ENCODE measurements at regions of chr19 and their contacts with region 1.

Region 1: GRCh38 chr19:3692141-3693024 is 7.9 kb downstream of the PIP5K1C start:
- DNase-seq: peak in 1 of 2 experiments; percentile 84
- H3K4me3 ChIP-seq: no peak overlapping the region
- H3K27ac ChIP-seq: no peak overlapping the region
- H3K4me1 ChIP-seq: peaks cover 0 to 11% (median 8%) of the 10 kb centered on the region in 4 experiments; a peak in 5 of 7 replicates
- H3K27me3 ChIP-seq: no peaks in the 10 kb centered on the region; a peak in 1 of 7 replicates
- CTCF ChIP-seq: peak; percentile 53 to 76 (median 70)
- EP300 ChIP-seq: no peak
- POLR2A ChIP-seq: no peak
- RAD21 ChIP-seq: peak; percentile 7 to 32; a peak in 3 of 4 replicates

Region 2: DNA sequence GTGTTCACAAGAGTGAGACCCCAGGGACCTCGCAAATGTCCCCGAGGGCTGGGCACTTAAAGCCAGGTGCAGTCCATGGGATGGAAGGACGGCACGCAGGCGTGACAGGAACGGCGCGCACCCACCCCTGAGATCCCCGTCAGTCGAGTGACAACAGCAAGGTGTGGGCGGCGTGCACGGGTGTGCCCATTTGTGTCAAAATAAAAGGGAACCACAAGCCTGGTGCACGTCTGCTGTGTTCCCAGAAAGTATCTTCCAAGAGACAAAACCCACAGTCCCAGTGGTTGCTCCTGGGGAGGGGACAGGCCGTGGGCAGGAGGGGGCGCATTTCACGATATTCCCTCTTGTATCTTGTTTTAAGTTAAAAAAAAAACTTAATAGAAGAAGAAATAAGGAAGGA is 50.1 kb before region 1 on chr19:
- CTCF ChIA-PET with region 1: no interaction called
- POLR2A ChIA-PET with region 1: no interaction called
- DNase-seq: no peak
- H3K4me3 ChIP-seq: no peak overlapping the region
- H3K27ac ChIP-seq: no peak overlapping the region
- H3K4me1 ChIP-seq: no peaks in the 10 kb centered on the region
- H3K27me3 ChIP-seq: no peaks in the 10 kb centered on the region
- CTCF ChIP-seq: no peak
- EP300 ChIP-seq: no peak
- POLR2A ChIP-seq: no peak
- RAD21 ChIP-seq: no peak

Region 3: GRCh38 chr19:3655402-3656072 is 36.8 kb before region 1 on chr19:
- CTCF ChIA-PET with region 1: interaction called, 10 read pairs
- POLR2A ChIA-PET with region 1: no interaction called
- DNase-seq: no peak
- H3K4me3 ChIP-seq: no peak overlapping the region
- H3K27ac ChIP-seq: no peak overlapping the region
- H3K4me1 ChIP-seq: no peaks in the 10 kb centered on the region
- H3K27me3 ChIP-seq: no peaks in the 10 kb centered on the region
- CTCF ChIP-seq: no peak
- EP300 ChIP-seq: no peak
- POLR2A ChIP-seq: no peak
- RAD21 ChIP-seq: no peak

Region 4: GRCh38 chr19:3670796-3671679 is 21.3 kb before region 1 on chr19:
- CTCF ChIA-PET with region 1: interaction called, 85 read pairs
- POLR2A ChIA-PET with region 1: interaction called, 12 read pairs
- DNase-seq: no peak
- H3K4me3 ChIP-seq: no peak overlapping the region
- H3K27ac ChIP-seq: no peak overlapping the region; the same call in 1 of the 2 replicates
- H3K4me1 ChIP-seq: peaks cover 0 to 21% (median 10%) of the 10 kb centered on the region in 4 experiments; a peak in 5 of 7 replicates
- H3K27me3 ChIP-seq: no peaks in the 10 kb centered on the region
- CTCF ChIP-seq: no peak
- EP300 ChIP-seq: no peak
- POLR2A ChIP-seq: no peak
- RAD21 ChIP-seq: no peak

Region 5: GRCh38 chr19:3710265-3710812 is 18.0 kb after region 1 on chr19:
- CTCF ChIA-PET with region 1: interaction called, 38 read pairs
- POLR2A ChIA-PET with region 1: interaction called, 5 read pairs
- DNase-seq: peak in 1 of 2 experiments; percentile 65
- H3K4me3 ChIP-seq: no peak overlapping the region
- H3K27ac ChIP-seq: no peak overlapping the region
- H3K4me1 ChIP-seq: peaks cover 0 to 20% (median 14%) of the 10 kb centered on the region in 4 experiments; a peak in 4 of 7 replicates
- H3K27me3 ChIP-seq: peaks cover 0 to 3% (median 0%) of the 10 kb centered on the region in 4 experiments; a peak in 1 of 7 replicates
- CTCF ChIP-seq: no peak
- EP300 ChIP-seq: no peak
- POLR2A ChIP-seq: no peak
- RAD21 ChIP-seq: no peak

Region 6: DNA sequence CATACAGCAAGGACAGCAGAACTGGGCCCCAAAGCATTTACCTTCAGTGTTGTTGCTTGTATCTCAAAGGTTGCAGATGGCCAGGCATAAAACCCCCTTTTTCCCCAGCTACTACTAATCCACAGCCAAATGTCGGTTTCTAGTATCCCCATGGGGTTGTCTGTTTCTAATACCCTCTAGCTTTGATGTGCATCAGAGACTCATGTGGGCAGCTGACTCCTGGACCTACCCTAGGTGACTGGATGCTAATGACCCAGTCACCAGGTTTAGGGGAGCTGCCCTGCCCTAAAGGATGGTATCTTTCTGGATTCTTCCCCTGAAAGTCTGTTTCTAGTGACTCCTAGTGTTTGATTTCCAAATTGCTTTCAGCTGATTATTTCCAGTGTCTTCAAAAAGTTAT is 39.7 kb after region 1 on chr19:
- CTCF ChIA-PET with region 1: no interaction called
- POLR2A ChIA-PET with region 1: no interaction called
- DNase-seq: no peak
- H3K4me3 ChIP-seq: no peak overlapping the region
- H3K27ac ChIP-seq: no peak overlapping the region
- H3K4me1 ChIP-seq: no peaks in the 10 kb centered on the region
- H3K27me3 ChIP-seq: no peaks in the 10 kb centered on the region
- CTCF ChIP-seq: no peak
- EP300 ChIP-seq: no peak
- POLR2A ChIP-seq: no peak
- RAD21 ChIP-seq: peak in 1 of 2 experiments; percentile 13; a peak in 1 of 4 replicates

Measured in H1 (cell line).